ENCODE measurements at regions of chr17 and their contacts with region 1.

Region 1: DNA sequence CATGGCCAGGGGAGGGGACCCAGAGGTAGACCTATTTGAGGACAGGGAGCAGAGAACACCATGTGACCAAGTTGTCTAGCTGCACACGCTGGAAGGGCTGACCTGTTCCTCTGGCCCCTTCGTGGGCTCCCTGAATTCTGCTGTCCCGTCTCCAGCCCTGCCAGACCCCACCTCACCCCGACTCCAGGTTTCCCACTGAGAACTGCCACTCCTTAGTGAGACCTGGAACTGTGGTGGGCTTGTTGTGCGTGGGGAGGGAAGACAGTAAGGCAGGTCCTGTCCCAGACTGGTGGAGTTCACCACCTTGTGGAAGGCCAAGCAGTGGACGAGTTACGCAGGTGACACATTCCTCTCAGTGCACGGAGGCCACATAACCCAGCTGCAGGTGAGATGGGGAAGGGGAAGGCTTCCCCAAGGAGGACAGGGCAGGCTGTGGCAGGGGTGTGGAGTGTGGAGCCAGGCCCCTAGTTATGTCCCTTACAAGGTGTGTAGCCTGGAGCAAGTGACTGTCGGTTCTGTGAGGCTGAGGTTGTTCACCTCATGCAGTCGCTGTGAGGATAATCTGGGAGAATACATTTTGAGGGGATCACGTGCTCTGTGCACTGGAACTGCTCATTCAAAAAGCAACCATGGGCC is 54.7 kb downstream of the USP22 start:
- DNase-seq: peak in 1 of 2 experiments; percentile 32
- H3K4me3 ChIP-seq: no peak overlapping the region
- H3K4me3 Mint-ChIP-seq: no peak overlapping the region
- H3K27ac Mint-ChIP-seq: no peak overlapping the region
- H3K4me1 ChIP-seq: no peaks in the 10 kb centered on the region
- H3K4me1 Mint-ChIP-seq: no peaks in the 10 kb centered on the region
- H3K27me3 ChIP-seq: no peaks in the 10 kb centered on the region
- H3K27me3 Mint-ChIP-seq: no peaks in the 10 kb centered on the region
- CTCF ChIP-seq: peak in 1 of 2 experiments; percentile 21

Region 2: DNA sequence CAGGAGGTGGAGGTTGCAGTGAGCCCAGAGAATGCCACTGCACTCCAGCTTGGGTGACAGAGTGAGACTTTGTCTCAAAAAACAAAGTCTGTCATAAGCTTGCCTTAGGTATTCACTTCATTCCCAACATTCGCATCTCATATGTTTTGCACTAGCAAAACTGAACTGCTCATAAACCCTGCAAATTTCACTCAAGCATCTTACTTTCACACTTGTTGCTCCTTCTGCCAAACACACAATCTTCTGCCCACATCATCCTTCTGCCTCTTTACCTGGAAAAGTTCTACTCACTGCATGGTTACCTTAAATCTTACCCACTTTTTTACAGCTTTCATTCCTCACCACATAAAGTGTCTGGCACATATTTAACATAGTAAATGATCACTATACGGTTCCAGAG is 97.8 kb before region 1 on chr17:
- CTCF ChIA-PET with region 1: no interaction called
- POLR2A ChIA-PET with region 1: no interaction called
- intact Hi-C with region 1: no loop called
- DNase-seq: no peak
- H3K4me3 ChIP-seq: no peak overlapping the region
- H3K4me3 Mint-ChIP-seq: no peak overlapping the region
- H3K27ac Mint-ChIP-seq: no peak overlapping the region
- H3K4me1 ChIP-seq: no peaks in the 10 kb centered on the region
- H3K4me1 Mint-ChIP-seq: peaks cover 7% of the 10 kb centered on the region
- H3K27me3 ChIP-seq: no peaks in the 10 kb centered on the region
- H3K27me3 Mint-ChIP-seq: peaks cover 4% of the 10 kb centered on the region
- CTCF ChIP-seq: no peak

Region 3: DNA sequence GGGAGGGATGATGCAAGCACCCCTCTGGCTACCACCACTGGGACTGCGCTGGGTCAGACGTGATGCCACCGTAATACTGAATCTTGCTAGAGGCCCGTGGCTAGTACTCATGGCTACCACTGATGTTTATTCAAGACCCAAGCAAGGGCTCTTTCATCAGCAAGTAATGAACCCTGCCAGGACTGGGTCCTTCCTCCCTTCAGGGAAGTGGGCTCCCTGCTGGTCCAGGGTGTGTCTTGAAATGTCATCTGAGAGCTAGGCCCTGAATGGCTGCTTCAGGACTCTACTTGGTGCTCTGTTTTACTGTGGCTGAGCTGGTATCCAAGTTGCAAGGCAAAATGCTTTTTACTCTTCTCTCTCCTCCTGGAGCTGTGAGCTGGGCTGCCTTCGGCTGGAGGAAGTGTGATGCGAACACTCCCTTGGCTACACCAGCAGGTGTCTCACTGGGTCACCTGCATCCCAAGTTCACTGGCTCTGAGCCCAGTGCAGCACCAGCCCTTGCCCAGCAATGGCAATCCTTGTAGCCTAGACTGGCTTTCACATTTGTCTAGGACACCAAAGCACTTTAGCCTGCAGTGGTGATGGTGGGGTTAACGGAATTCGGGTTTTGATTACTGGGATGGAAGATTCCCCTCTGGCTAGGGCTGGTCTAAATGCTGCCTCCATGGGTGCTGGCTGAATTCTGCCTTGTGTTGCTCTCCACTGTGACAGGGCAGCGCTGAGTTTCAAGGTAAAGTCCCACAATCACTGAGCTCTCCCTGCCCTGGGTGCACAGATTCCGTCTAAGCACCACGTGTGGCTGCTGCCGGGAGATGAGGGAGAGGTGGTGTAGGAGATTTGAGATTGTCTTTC is 43.9 kb before region 1 on chr17:
- CTCF ChIA-PET with region 1: interaction called, 19 read pairs
- POLR2A ChIA-PET with region 1: no interaction called
- intact Hi-C with region 1: loop called (anchors 1 kb)
- DNase-seq: peak; percentile 63 to 74
- H3K4me3 ChIP-seq: no peak overlapping the region
- H3K4me3 Mint-ChIP-seq: no peak overlapping the region
- H3K27ac Mint-ChIP-seq: no peak overlapping the region
- H3K4me1 ChIP-seq: no peaks in the 10 kb centered on the region
- H3K4me1 Mint-ChIP-seq: peaks cover 6% of the 10 kb centered on the region
- H3K27me3 ChIP-seq: no peaks in the 10 kb centered on the region
- H3K27me3 Mint-ChIP-seq: peaks cover 3% of the 10 kb centered on the region
- CTCF ChIP-seq: peak; percentile 73 to 89

Region 4: DNA sequence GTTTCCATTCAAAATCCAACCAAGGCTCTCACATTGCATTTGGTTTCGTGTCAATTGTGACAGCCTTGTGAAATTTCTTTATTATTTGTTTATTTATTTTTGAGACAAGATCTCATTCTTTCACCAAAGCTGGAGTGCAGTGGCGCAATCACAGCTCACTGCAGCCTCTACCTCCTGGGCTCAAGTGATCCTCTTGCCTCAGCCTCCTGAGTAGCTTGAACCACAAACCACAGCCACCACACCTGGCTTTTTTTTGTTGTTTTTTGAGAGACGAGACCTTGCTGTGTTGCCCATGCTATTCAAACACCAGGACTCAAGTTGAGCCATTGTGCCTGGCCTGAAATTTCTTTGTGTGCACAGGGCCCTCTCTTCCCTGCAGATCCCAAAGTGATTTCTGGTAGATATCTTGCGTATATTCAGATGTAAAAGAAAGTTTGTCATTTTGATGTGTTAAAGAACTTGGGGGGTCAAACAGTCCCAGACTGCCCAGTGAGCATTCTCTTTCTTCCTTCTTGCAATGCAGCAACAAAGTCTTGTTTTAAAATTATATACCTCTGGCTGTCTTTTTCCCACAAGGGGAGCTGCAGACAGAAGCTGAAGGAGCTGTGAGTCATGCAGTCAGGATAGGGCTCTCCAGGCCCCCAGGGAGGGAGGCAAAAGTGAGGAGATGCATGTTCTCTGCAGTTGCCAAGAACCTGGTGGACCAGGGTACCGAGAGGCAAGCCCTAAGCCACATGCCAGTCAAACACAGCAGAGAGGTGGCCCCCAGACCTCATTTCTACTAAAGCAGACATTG is 70.2 kb after region 1 on chr17:
- CTCF ChIA-PET with region 1: no interaction called
- POLR2A ChIA-PET with region 1: no interaction called
- intact Hi-C with region 1: no loop called
- DNase-seq: peak in 1 of 2 experiments; percentile 24
- H3K4me3 ChIP-seq: no peak overlapping the region
- H3K4me3 Mint-ChIP-seq: no peak overlapping the region
- H3K27ac Mint-ChIP-seq: no peak overlapping the region
- H3K4me1 ChIP-seq: no peaks in the 10 kb centered on the region
- H3K4me1 Mint-ChIP-seq: no peaks in the 10 kb centered on the region
- H3K27me3 ChIP-seq: no peaks in the 10 kb centered on the region
- H3K27me3 Mint-ChIP-seq: no peaks in the 10 kb centered on the region
- CTCF ChIP-seq: peak in 1 of 2 experiments; percentile 3

Measured in Caco-2 (cell line).